Right ventricle myocardium inferior (tissue), 1 donor: ENCODE measurements at regions of chr1 and their contacts with region 1.

Region 1: DNA sequence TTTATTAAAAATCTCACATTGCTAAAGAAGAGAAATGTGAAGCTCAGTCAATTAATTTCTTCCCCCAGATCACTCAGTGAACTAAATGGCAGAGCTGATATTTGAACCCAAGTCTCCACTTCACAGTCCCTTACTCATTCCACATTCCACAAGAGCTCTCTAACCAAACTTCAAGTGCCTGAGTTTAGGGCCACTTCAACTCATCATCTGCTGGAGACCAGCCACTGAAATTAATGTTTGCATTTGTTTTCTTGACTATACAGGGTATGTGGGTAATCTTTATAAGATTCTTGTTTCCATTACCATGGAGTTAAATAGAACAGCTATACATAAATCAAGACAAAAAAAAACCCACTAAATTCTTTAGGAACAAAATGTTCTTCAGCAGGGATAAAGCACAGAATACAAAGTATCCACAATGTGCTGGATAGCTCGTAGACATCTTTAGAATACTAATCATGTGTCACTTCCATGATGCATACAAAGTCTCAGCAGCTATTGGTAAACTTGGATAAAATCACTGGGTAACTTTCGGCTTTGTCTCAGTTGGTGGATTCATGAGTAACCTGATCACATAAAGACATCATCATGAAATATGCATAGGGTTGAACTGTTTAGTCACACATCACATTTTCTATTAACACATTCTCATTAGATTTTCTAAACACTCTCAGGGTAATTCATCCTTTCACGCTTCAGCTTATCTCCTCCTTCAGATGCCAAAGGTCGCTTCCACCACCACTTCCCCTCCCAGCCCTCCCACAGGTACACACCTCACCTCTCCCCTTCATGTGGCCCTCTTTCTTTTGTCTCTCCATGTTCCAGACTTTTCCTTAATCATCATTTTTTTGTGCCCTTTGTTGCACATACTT is 89.8 kb downstream of the LRRC53 start:
- DNase-seq: no peak
- ATAC-seq: peak; percentile 45

Region 2: DNA sequence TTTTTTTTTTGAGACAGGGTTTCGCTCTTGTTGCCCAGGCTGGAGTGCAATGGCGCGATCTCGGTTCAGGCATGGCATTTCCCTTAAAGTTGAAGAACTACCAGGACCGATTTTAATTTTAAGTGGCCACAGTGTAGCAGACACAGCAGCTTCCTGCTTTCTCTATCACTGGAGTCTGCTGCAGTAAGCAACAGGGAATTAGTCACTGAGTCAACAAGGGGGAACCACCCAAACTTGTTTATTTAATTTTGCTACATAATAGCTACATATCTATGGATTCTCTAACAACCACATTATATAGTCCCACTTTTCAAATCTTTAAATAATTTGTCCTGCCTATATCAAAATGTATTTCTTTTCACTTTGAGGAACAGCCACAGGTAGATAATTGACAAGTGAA is 199.9 kb before region 1 on chr1:
- intact Hi-C with region 1: no loop called
- DNase-seq: no peak
- ATAC-seq: no peak

Region 3: DNA sequence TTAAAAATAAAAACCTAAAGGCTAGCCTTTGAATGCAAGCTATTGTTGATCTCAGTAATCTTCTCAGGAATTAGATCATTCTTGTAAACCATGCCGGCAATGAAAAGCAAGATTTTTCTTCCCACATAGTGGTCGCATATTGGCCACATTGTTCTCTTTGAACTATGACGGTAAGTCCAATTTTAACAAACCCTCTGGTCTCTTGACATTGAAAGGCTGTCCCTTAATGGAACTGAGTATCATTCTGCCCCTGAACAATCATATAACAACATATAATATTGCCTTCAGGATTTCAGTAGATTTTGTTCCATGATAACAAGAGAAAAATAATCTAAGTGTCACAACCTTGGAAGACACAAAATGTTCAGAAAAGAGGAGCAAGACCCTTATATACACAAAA is 186.2 kb before region 1 on chr1:
- intact Hi-C with region 1: loop called (anchors 5 kb)
- DNase-seq: no peak
- ATAC-seq: no peak

Region 4: DNA sequence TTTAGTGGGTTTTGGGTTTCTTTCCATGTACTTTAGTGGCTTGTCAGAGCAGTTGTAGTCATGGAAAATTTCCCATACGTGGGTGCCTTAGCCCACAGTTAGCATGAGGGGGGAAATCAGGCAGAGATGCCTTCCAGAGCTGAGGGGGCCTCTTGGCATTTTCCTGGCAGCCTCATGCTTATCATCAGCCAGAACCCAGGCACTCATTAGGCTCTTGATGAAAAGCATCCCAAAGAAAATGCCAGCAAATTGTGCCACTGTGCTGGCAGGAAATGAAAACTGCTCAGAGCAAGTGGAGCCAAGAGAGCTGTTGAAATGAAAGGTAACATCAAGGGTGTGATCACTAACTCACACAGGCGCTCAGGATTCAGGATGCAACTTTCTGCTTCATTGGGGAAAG is 59.4 kb before region 1 on chr1:
- intact Hi-C with region 1: loop called (anchors 5 kb)
- DNase-seq: no peak
- ATAC-seq: peak; percentile 95

Region 5: DNA sequence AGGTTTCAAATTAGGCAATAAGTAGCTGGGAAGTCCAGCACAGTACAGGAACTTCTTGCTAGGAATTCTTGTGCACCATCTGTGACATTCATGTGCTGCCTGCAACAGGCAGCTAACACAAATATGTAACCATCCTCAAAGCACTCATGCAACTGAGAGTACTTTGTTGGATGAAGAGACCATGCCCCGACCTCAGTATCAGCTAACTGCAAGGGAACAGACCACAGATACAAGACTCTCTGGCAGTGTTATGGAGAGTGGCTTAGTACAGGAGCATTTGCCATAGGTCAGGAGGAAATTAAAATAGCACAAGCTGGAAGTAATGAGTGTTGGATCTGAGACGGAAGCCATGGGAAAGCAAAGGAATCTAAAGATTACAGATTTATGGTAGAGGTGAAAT is 33.8 kb before region 1 on chr1:
- intact Hi-C with region 1: loop called (anchors 5 kb)
- DNase-seq: no peak
- ATAC-seq: peak; percentile 61

Region 6: DNA sequence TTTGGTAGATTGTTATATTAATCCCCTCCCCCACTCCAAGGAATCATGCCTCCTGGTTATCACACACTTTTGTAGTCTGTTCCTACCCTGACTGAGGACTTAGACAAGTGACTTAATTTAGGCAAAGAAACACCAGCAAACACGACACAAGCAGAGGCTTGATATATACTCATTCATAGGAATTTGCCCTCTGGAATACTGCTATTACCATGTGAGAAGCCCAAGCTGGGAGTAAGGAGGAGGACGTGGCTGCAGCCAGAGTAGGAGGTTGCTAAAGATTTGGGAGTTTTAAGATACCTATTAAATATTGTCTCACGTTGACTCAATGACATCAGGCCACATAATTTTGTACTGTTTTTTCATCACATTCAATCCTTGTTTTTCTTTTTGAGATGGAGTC is 10.4 kb before region 1 on chr1:
- intact Hi-C with region 1: no loop called
- DNase-seq: no peak
- ATAC-seq: no peak

Region 7: DNA sequence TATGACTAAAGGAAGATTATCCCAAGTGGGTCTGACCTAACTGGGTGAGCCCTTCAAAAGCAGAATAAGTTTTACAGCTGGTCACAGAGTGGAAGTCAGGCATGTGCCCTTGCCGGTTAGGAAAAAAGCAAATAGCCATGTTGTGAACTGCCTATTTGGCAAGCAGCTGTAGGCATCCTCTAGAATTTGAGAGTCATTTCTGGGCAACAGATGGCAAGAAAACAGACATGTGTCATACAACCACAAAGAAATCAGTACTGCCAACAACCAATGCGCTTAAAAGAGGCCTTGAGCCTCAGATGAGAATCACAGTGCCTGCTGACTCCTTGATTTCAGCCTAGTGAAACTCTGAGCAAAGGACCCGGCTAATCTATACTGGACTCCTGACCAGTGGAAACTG is 63.0 kb after region 1 on chr1:
- intact Hi-C with region 1: no loop called
- DNase-seq: no peak
- ATAC-seq: no peak